ENCODE measurements at regions of chr10 and their contacts with region 1.

Region 1: DNA sequence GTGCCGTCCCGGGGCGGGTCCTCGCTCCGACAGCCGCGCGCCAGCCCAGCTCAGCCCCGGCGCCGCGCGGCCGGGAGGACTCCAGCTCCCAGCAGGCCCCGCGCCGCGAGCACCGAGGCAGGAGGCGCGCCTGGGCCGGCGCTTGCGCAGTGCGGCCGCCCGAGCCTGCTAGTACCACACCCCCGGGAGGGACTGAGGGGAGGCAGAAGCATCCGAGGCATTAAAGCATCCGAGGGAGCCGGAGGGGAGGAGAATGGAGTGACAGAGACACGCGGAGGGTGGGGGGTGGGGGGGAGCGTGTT is at the start of gene GRK5:
- DNase-seq: peak; percentile 95 to 98 (median 97)
- ATAC-seq: peak; percentile 89 to 97 (median 92)
- H3K4me3 ChIP-seq: peak within 1 kb of the TSS; percentile 74 to 100 (median 92)
- H3K27ac ChIP-seq: peak within 1 kb of the TSS; percentile 93 to 100 (median 98)
- H3K4me1 ChIP-seq: peaks cover 0 to 51% (median 32%) of the 10 kb centered on the region in 12 donors
- H3K27me3 ChIP-seq: no peaks in the 10 kb centered on the region
- CTCF ChIP-seq: no peak
- POLR2A ChIP-seq: peak in 1 of 2 donors; percentile 66
- total RNA-seq, gene GRK5: 17.0 to 58.0 (median 32.2) TPM

Region 2: DNA sequence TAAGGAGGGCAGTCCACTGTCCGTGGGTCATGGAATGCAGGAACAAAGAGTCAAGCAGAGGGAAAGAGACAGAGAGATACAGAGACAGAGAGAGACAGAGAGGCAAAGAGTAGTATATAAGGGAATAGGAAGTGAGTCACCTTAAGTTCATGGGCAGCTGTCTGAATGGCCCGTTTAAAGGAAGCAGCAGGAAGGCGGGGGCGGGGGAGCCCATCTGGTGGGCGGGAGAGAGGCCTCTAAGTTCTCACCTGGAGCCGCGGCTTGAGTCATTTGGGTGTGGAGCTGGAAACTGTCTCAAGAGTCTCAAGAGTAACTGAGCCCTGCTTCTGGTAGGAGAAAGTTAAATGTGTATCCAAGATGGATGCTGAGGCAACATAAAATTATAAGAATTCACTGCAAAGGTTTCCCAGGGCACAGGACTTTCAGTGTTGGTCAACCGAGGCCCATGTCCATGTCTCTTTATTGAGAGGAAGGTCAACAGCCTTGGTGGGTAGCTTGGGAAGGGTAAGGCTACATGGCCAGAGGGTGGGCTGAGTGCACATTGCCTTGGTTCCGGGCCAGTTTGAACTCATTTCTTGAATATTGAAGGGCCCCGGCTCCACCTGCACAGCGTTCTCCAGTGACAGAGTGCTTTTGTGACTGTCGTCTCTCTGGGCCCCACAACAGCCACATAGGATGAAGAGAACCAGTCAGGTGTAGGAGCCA is 367.1 kb before region 1 on chr10:
- intact Hi-C with region 1: no loop called
- DNase-seq: no peak
- ATAC-seq: no peak
- H3K4me3 ChIP-seq: no peak overlapping the region
- H3K27ac ChIP-seq: no peak overlapping the region
- H3K4me1 ChIP-seq: peaks cover 0 to 23% (median 5%) of the 10 kb centered on the region in 12 donors
- H3K27me3 ChIP-seq: no peaks in the 10 kb centered on the region
- CTCF ChIP-seq: no peak
- POLR2A ChIP-seq: no peak

Region 3: GRCh38 chr10:119189811-119190282 is 17.5 kb before region 1 on chr10:
- intact Hi-C with region 1: no loop called
- DNase-seq: no peak
- ATAC-seq: no peak
- H3K4me3 ChIP-seq: no peak overlapping the region
- H3K27ac ChIP-seq: no peak overlapping the region
- H3K4me1 ChIP-seq: peaks cover 0 to 20% (median 0%) of the 10 kb centered on the region in 12 donors
- H3K27me3 ChIP-seq: no peaks in the 10 kb centered on the region
- CTCF ChIP-seq: no peak
- POLR2A ChIP-seq: no peak

Region 4: DNA sequence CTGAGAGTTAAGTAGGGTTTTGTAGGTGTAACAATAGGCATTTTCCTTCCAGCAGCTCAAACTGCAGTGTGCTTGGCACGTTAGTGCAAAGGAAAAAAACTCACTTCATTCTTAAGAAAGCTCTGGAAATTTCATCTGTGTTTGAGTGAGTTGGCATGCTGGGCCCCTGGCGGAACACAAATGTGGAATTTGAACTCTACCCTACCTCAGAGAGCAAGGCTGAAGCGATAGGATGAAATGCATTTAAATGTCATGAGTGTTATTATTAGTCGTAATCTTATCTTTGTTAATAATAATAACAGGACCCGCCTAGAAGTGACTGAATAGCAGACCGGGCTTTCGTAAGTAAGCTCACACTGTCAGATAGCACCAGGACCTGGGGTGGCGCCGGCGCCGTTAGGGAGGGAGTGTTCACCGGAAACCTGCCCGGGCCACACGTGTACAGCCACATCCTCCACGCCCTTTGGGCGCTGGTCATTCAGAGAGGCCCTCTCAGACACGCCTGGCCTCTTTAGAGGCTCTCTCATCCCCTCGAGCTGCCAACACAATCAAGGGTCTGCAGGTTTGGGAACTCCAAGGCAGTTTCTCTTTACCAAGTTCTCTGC is 63.5 kb after region 1 on chr10:
- intact Hi-C with region 1: loop called in 6 of 10 experiments (anchors 1 to 10 kb)
- DNase-seq: peak; percentile 88 to 95 (median 90)
- ATAC-seq: peak; percentile 89 to 95 (median 90)
- H3K4me3 ChIP-seq: peak overlapping the region in 7 of 12 donors; percentile 5 to 25 (median 19)
- H3K27ac ChIP-seq: peak overlapping the region; percentile 28 to 86 (median 78)
- H3K4me1 ChIP-seq: peaks cover 23 to 96% (median 71%) of the 10 kb centered on the region in 12 donors
- H3K27me3 ChIP-seq: no peaks in the 10 kb centered on the region
- CTCF ChIP-seq: peak in 1 of 12 donors; percentile 7
- POLR2A ChIP-seq: no peak

Region 5: GRCh38 chr10:119299531-119299930 is 92.2 kb after region 1 on chr10:
- intact Hi-C with region 1: loop called in 2 of 10 experiments (anchors 2 to 5 kb)
- DNase-seq: peak in 2 of 5 donors; percentile 27 to 50
- ATAC-seq: peak in 2 of 4 donors; percentile 12 to 24
- H3K4me3 ChIP-seq: no peak overlapping the region
- H3K27ac ChIP-seq: no peak overlapping the region
- H3K4me1 ChIP-seq: peaks cover 0 to 86% (median 50%) of the 10 kb centered on the region in 12 donors
- H3K27me3 ChIP-seq: no peaks in the 10 kb centered on the region
- CTCF ChIP-seq: peak in 2 of 12 donors; percentile 11 to 26
- POLR2A ChIP-seq: no peak

Region 6: GRCh38 chr10:119341459-119342301 is 134.4 kb after region 1 on chr10:
- intact Hi-C with region 1: loop called in 2 of 10 experiments (anchors 5 kb)
- DNase-seq: peak; percentile 77 to 92 (median 83)
- ATAC-seq: peak; percentile 80 to 85 (median 82)
- H3K4me3 ChIP-seq: no peak overlapping the region
- H3K27ac ChIP-seq: peak overlapping the region; percentile 54 to 87 (median 78)
- H3K4me1 ChIP-seq: peaks cover 3 to 76% (median 42%) of the 10 kb centered on the region in 12 donors
- H3K27me3 ChIP-seq: no peaks in the 10 kb centered on the region
- CTCF ChIP-seq: no peak
- POLR2A ChIP-seq: no peak

Region 7: DNA sequence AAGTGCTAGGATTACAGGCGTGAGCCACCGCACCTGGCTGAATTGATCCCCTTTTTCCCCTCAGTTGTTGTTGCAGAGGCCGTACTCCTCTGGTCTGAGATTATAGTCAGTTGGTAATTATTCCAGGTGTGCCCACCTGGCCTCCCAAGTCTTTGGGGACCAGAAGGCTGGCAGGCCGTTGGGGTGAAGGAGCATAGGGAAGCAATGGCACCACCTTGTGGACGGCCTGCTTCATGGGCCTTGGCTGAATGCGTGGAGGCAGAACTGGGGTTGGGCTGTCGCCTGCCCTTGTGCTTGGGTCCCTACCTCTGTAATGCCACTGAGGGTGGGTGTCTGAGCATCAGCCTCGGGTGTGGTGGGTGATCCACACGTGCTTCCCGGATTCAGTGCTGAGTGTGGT is 209.5 kb after region 1 on chr10:
- intact Hi-C with region 1: loop called in 9 of 10 experiments (anchors 1 to 10 kb)
- DNase-seq: peak; percentile 68 to 81 (median 76)
- ATAC-seq: peak in 3 of 4 donors; percentile 28 to 48 (median 34)
- H3K4me3 ChIP-seq: no peak overlapping the region
- H3K27ac ChIP-seq: peak overlapping the region in 7 of 12 donors; percentile 1 to 89 (median 78)
- H3K4me1 ChIP-seq: peaks cover 3 to 78% (median 51%) of the 10 kb centered on the region in 12 donors
- H3K27me3 ChIP-seq: no peaks in the 10 kb centered on the region
- CTCF ChIP-seq: peak; percentile 60 to 87 (median 76)
- POLR2A ChIP-seq: no peak

Region 8: GRCh38 chr10:119596537-119597404 is 389.5 kb after region 1 on chr10 and contains the start of gene TIAL1:
- intact Hi-C with region 1: loop called in 1 of 10 experiments (anchors 10 kb)
- DNase-seq: peak; percentile 97 to 99 (median 98)
- ATAC-seq: peak; percentile 94 to 97 (median 96)
- H3K4me3 ChIP-seq: peak within 1 kb of the TSS; percentile 66 to 91 (median 88)
- H3K27ac ChIP-seq: peak within 1 kb of the TSS; percentile 94 to 100 (median 99)
- H3K4me1 ChIP-seq: peaks cover 0 to 49% (median 43%) of the 10 kb centered on the region in 12 donors
- H3K27me3 ChIP-seq: no peaks in the 10 kb centered on the region
- CTCF ChIP-seq: no peak
- POLR2A ChIP-seq: peak; percentile 40 to 79
- total RNA-seq, gene TIAL1: 36.9 to 86.3 (median 67.3) TPM

Measured in heart left ventricle (tissue), 16 donors.